Gastrocnemius medialis (tissue), 4 donors: ENCODE measurements at regions of chr4 and their contacts with region 1.

Region 1: DNA sequence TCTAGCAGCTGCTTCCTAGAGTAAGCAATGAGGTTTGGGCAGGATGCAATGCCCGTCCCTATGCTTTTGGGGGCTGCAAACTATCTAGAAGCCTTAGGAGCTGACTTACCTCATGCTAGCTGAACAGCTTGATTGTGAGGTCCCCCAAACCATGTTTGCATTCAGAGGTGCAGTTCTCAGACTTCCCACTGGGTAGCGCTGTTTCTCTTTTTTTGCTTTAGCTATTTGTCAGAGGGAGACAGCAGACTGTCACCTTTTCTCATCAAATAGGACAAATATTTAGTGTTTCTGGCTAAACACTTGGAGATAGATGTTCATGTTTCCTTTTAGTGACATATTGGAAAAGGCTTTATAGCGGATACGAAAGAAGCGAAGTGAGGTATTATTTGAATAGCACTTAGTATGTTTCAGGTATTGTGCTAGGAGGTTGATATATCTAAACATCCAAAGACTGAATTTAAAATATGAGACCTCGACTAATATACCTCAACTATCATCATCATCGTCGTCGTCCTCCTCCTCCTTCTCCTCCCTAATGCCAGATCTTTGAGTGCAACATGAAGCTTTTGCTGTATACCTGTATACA is 18.7 kb upstream of the TMEM192 start:
- DNase-seq: peak in 1 of 2 donors; percentile 24
- ATAC-seq: peak in 1 of 2 donors; percentile 58
- H3K4me3 ChIP-seq: no peak overlapping the region
- H3K27ac ChIP-seq: no peak overlapping the region
- H3K4me1 ChIP-seq: no peaks in the 10 kb centered on the region
- H3K27me3 ChIP-seq: no peaks in the 10 kb centered on the region
- CTCF ChIP-seq: peak; percentile 75 to 81 (median 79)
- POLR2A ChIP-seq: no peak

Region 2: DNA sequence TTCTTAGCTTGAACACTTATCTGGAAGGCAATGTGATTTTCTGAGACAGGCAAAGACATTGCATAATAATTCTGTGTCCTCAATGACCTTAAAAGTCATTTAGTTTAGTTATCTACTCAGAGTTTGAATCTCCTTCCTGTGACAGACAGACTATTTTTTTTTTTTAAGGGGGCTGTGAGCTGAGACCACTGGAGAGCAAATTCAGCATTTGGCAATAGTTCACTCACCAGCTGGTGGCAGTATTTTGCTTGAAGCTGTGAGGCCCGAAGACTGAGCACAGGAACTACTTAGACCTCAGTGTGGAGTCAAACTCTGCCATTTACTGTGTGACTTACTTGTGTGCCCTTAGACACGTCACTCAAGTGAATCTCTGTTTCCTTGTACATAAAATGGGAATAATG is 224.6 kb after region 1 on chr4:
- in situ Hi-C with region 1: loop called in 1 of 4 experiments (anchors 25 kb)
- intact Hi-C with region 1: no loop called
- DNase-seq: no peak
- ATAC-seq: no peak
- H3K4me3 ChIP-seq: no peak overlapping the region
- H3K27ac ChIP-seq: no peak overlapping the region
- H3K4me1 ChIP-seq: no peaks in the 10 kb centered on the region
- H3K27me3 ChIP-seq: no peaks in the 10 kb centered on the region
- CTCF ChIP-seq: peak in 2 of 5 experiments; percentile 16 to 22
- POLR2A ChIP-seq: no peak

Region 3: DNA sequence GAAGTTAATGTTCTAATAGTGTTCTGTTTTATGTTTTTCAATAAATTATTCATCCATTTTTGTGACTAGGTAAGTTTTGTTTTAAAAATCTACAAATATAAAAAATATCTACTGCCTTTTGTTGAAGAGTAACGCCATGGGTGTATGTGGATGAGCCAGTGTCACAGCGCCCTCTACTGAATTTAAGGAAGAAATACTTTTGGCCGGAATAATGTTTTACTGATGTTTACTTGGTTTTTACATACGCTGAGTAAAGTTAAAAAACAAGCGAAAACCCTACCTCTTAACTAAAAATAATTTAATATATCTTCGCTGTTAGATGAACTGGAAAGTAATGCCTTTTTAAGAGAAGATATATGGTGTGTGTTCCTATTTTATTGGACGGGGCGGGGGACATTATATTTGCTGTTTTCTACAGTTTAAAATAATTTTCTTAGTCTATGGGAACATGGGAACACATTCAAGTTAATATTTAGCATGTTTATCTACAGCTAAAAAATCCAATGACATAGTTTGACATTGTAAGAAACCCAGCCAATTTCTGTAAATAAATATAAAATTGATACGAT is 333.6 kb after region 1 on chr4:
- in situ Hi-C with region 1: loop called (anchors 5 to 10 kb)
- intact Hi-C with region 1: loop called (anchors 1 kb)
- DNase-seq: no peak
- ATAC-seq: peak in 1 of 2 donors; percentile 53
- H3K4me3 ChIP-seq: no peak overlapping the region
- H3K27ac ChIP-seq: no peak overlapping the region
- H3K4me1 ChIP-seq: no peaks in the 10 kb centered on the region
- H3K27me3 ChIP-seq: no peaks in the 10 kb centered on the region
- CTCF ChIP-seq: peak; percentile 50 to 71 (median 61)
- POLR2A ChIP-seq: no peak

Region 4: DNA sequence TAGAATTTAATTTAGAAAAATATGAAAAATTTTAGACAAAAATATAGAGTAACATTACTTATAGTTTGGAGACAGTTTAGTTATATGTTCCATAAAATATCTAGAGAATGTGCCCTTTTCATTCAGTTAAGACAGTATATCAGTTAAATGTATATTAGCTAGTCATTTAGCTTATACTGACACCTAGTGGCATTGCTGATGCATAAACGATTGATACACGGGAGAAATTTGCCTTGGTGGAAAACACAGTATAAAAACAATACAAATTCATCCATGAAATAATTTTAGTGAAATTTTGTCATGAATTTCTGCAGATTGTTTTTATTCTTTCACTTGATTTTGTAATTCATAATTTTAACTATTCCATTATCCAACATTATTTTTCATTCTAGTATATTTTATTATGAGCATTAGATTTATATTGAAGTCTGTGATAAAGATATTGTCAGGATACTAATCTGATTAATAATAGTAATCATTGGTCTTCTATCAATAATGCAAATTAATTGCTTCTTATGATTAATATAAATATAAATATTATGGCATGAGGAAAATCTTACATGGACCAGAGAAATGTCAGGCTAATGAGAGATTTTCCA is 960.7 kb after region 1 on chr4:
- in situ Hi-C with region 1: loop called in 1 of 4 experiments (anchors 25 kb)
- intact Hi-C with region 1: no loop called
- DNase-seq: no peak
- ATAC-seq: no peak
- H3K4me3 ChIP-seq: no peak overlapping the region
- H3K27ac ChIP-seq: no peak overlapping the region
- H3K4me1 ChIP-seq: no peaks in the 10 kb centered on the region
- H3K27me3 ChIP-seq: no peaks in the 10 kb centered on the region
- CTCF ChIP-seq: peak; percentile 39 to 77 (median 67)
- POLR2A ChIP-seq: no peak